ENCODE measurements at regions of chr11 and their contacts with region 1.

Region 1: GRCh38 chr11:66081505-66081904 is 11.4 kb downstream of the PACS1 start:
- DNase-seq: peak; percentile 44
- H3K4me3 ChIP-seq: no peak overlapping the region
- H3K27ac ChIP-seq: peak overlapping the region; percentile 52
- H3K4me1 ChIP-seq: peaks cover 40% of the 10 kb centered on the region
- H3K27me3 ChIP-seq: no peaks in the 10 kb centered on the region
- CTCF ChIP-seq: no peak
- POLR2A ChIP-seq: no peak

Region 2: DNA sequence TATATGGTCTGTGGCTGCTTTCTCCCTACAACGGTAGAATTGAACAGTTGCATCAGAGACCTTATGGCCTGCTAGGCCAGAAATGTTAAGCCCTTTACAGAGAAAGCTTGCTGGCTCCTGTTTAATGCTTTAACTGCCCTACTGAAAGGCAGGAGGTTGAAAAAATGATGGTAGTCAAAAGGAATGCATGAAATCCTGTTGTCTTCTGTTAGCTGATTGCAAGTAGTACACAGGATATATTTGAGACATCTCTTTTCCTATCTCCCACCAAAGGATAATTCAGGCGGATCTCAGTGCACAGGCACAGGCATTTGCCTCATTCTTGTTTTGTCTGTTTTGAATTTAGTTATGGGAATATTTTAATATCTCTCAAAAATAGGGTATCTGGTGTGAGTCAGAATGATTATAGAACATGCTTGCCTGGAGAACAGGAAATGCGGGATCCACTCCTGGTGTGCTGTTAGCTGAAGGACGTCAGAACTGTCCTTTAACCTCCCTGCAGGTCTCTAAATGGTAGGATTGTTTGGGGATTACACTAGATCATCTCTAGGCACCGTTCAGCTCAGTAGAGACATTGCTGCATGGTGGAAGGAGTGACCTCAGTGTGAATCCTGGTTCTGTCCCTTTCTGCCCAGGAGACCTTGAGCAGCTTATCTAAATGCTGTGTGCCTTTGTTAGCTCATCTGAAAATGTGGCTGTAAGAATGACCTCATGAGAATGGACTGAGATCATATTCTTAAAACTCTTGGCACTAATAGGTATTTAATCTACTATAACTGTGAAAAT is 38.0 kb after region 1 on chr11:
- CTCF ChIA-PET with region 1: no interaction called
- POLR2A ChIA-PET with region 1: no interaction called
- dilution Hi-C with region 1: no loop called
- intact Hi-C with region 1: loop called (anchors 5 kb)
- DNase-seq: peak; percentile 71
- H3K4me3 ChIP-seq: no peak overlapping the region
- H3K27ac ChIP-seq: peak overlapping the region; percentile 78
- H3K4me1 ChIP-seq: peaks cover 40% of the 10 kb centered on the region
- H3K27me3 ChIP-seq: no peaks in the 10 kb centered on the region
- CTCF ChIP-seq: no peak
- POLR2A ChIP-seq: no peak